ENCODE measurements at regions of chr13 and their contacts with region 1.

Region 1: DNA sequence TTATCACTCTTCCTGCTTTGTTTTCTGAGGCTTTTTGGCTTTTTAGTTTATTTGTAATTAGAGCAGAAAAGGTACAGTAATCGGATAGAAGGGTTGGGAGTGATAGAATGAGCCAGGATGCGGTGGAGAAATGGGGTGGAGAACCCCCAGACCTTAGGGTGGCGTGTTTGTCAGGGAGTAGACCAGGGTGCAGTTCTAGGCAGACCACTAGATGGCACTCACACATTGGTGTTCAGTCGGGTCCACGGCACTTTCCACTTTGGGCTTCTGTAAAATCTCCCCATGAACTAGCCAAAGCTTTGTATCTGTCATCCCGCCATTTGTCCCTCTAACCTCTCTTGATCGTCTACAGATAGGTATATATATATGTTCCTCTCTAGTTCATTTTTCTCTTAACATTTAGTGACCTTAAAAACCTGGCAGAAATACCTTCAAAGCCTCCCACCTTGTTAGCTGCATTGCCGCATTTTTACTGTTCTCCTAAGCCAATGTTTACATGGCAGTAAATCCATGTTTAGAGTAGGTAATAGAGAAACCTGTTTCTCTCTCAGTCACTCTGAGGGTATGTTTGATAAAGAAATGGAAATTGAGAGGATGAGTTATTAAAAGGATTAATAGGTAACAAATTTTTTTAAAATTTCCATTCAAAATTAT is 154.9 kb downstream of the TM9SF2 start:
- DNase-seq: peak; percentile 95
- H3K4me3 Mint-ChIP-seq: peak overlapping the region; percentile 77
- H3K27ac Mint-ChIP-seq: peak overlapping the region; percentile 50
- H3K4me1 Mint-ChIP-seq: peaks cover 35% of the 10 kb centered on the region
- H3K27me3 Mint-ChIP-seq: peaks cover 15% of the 10 kb centered on the region

Region 2: GRCh38 chr13:99501184-99501847 is 154.9 kb before region 1 on chr13 and contains the start of gene TM9SF2:
- intact Hi-C with region 1: loop called (anchors 5 kb)
- DNase-seq: peak; percentile 99
- H3K4me3 Mint-ChIP-seq: peak within 1 kb of the TSS; percentile 94
- H3K27ac Mint-ChIP-seq: peak within 1 kb of the TSS; percentile 96
- H3K4me1 Mint-ChIP-seq: peaks cover 60% of the 10 kb centered on the region
- H3K27me3 Mint-ChIP-seq: no peaks in the 10 kb centered on the region
- total RNA-seq, gene TM9SF2: 57.8 and 60.2 TPM in 2 replicates

Region 3: DNA sequence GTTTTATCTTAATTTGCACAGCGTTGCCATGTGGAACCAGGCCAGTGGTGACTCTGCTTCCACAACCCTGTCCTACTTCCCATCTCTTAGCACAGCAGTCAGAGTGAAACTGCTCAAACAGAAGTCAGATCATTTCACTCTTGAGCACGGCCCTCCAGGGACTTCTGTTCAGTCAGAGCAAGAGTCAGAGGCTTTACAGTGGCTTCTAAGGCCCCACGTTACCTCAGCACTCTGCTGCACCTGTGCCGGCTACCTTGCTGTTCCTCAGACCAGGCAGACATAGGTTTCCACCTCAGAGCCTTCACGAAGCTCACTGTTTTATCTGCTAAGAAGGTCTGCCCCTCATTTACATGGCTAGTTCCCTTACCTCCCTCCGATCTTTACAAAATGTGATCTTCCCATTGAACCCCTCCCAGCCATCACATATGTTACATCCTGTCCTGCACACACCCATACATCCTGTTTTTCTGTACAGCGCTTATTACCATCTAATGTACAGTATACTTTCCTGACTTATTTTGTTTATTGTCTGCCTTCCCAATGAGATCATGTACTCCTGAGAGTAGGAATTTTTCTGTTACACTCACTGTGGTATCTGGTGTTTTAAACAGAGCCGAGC is 113.3 kb before region 1 on chr13:
- intact Hi-C with region 1: no loop called
- DNase-seq: peak; percentile 83
- H3K4me3 Mint-ChIP-seq: peak overlapping the region; percentile 39
- H3K27ac Mint-ChIP-seq: peak overlapping the region; percentile 23
- H3K4me1 Mint-ChIP-seq: peaks cover 30% of the 10 kb centered on the region
- H3K27me3 Mint-ChIP-seq: no peaks in the 10 kb centered on the region

Region 4: GRCh38 chr13:99955747-99956472 is 299.7 kb after region 1 on chr13:
- intact Hi-C with region 1: loop called (anchors 5 kb)
- DNase-seq: no peak
- H3K4me3 Mint-ChIP-seq: peak overlapping the region; percentile 35
- H3K27ac Mint-ChIP-seq: no peak overlapping the region
- H3K4me1 Mint-ChIP-seq: peaks cover 7% of the 10 kb centered on the region
- H3K27me3 Mint-ChIP-seq: peaks cover 77% of the 10 kb centered on the region

Region 5: GRCh38 chr13:100235311-100235901 is 579.2 kb after region 1 on chr13:
- intact Hi-C with region 1: loop called (anchors 2 kb)
- DNase-seq: peak; percentile 76
- H3K4me3 Mint-ChIP-seq: no peak overlapping the region
- H3K27ac Mint-ChIP-seq: no peak overlapping the region
- H3K4me1 Mint-ChIP-seq: peaks cover 7% of the 10 kb centered on the region
- H3K27me3 Mint-ChIP-seq: no peaks in the 10 kb centered on the region

Region 6: DNA sequence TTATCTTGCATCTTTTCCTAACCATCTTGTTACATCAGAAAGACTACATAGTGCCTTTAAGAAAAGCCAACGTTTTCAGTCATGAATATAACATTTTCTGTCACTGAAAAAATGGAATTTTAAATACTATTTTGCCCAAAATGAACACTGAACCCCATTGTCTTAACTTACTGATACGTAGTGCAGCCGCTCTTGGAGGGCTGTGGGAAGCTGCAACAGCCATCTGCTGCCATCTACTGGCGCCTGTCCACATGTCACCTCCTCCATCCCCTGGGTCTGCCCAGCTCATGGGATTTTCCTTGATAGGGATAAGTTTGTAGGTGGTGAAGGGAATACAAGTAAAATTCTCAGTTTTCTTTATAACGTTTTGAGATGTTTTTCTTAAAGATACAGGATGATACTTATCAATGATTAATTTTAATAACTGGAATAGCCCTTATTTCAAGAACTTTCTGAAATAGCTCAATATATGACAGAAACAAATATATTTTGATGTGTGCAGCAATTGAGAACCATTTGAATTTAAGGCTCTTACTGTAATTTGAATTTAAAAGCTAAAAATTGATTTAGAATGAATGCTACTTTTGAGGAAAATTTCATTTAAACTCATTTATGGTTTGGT is 858.7 kb after region 1 on chr13:
- intact Hi-C with region 1: loop called (anchors 2 kb)
- DNase-seq: peak; percentile 91
- H3K4me3 Mint-ChIP-seq: no peak overlapping the region
- H3K27ac Mint-ChIP-seq: no peak overlapping the region
- H3K4me1 Mint-ChIP-seq: peaks cover 14% of the 10 kb centered on the region
- H3K27me3 Mint-ChIP-seq: peaks cover 6% of the 10 kb centered on the region

Region 7: GRCh38 chr13:100674848-100675660 is 1018.8 kb after region 1 on chr13:
- intact Hi-C with region 1: loop called (anchors 1 kb)
- DNase-seq: peak; percentile 100
- H3K4me3 Mint-ChIP-seq: peak overlapping the region; percentile 92
- H3K27ac Mint-ChIP-seq: peak overlapping the region; percentile 90
- H3K4me1 Mint-ChIP-seq: peaks cover 25% of the 10 kb centered on the region
- H3K27me3 Mint-ChIP-seq: peaks cover 18% of the 10 kb centered on the region

Measured in activated CD4-positive, alpha-beta T cell treated with anti-CD3 and anti-CD28 coated beads, Interleukin-2, amount 10 ng/mL, durations not matched to agents 24 days and 14 days (primary cell).